ENCODE measurements at regions of chr2 and their contacts with region 1.

Region 1: DNA sequence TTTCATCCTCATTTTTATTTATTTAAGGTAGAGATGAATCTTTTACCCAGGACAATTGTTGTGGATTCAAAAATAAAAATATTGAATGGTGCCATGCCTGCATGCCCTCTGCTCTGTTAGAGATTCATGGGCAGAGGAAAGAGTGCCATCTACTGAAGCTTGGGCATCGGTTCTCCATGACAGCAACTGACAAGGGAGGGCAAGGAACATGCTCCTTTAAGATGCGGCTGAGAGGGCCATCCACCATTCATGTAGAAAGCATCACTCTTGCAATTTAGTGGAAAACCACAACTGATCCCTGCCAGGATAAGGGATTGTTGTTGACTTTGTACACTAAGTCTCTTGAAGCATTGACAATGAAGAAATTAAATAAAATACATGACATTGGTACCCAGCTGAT is 79.9 kb downstream of the PARD3B start:
- DNase-seq: peak; percentile 16
- H3K4me3 ChIP-seq: no peak overlapping the region
- H3K27ac ChIP-seq: no peak overlapping the region
- H3K4me1 ChIP-seq: no peaks in the 10 kb centered on the region
- H3K27me3 ChIP-seq: no peaks in the 10 kb centered on the region
- CTCF ChIP-seq: peak in 1 of 2 donors; percentile 43

Region 2: DNA sequence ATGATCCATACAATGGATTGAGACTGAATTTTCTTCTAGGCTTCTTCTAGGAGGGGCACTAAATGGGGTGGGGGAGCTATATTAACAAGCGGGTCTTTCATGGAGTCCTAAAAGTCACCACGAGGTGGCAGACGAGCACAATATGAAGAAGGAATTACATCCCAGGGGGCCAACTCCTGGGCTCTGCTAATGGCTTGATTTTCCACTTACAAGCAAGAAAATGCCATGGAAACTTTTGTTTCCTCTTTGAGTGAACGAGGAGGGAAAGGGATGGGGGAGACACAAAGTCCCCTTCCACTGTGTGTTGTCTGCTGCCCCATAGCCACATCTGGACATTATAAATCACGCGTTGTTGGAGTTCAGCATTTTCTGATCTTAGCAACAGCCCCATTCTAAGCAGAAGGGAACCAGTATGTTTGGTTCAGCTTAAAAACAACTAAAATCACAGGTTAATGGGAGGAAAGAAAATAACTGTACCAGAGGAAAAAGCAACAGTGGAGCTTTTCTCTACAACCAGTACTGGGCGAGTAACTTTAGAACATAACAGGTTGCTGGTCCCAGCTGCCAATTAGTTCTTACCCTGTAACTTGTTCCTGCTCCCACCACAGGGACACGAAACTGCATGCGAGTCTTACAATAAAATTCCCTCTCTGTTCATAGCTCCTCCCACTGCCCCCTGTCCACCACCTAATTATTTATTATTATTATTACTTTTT is 364.8 kb before region 1 on chr2:
- CTCF ChIA-PET with region 1: no interaction called
- dilution Hi-C with region 1: no loop called
- in situ Hi-C with region 1: no loop called
- intact Hi-C with region 1: loop called (anchors 5 kb)
- DNase-seq: peak; percentile 19
- H3K4me3 ChIP-seq: no peak overlapping the region
- H3K27ac ChIP-seq: no peak overlapping the region
- H3K4me1 ChIP-seq: peaks cover 4% of the 10 kb centered on the region
- H3K27me3 ChIP-seq: no peaks in the 10 kb centered on the region
- CTCF ChIP-seq: peak; percentile 65 to 76

Region 3: DNA sequence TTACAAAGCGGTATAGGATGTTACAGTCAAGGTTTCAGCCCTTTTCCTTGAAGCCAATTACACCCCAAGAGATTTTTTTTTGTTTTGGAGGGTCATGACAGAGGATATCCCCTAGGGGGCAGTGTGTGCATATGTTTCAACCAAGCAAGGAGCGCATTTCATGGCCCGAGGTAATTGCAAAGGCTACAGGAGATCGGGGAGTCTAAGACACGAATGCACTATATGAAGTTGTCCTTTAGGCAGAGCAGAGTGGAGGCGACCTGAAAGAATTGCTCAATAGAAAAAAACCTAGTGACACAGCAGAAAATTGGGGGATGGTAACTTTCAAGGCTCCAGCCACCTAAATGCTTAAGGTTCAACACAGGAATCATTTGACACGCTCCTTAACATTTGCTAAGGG is 299.7 kb before region 1 on chr2:
- CTCF ChIA-PET with region 1: no interaction called
- dilution Hi-C with region 1: no loop called
- in situ Hi-C with region 1: no loop called
- intact Hi-C with region 1: loop called (anchors 1 kb)
- DNase-seq: peak; percentile 59
- H3K4me3 ChIP-seq: no peak overlapping the region
- H3K27ac ChIP-seq: no peak overlapping the region
- H3K4me1 ChIP-seq: no peaks in the 10 kb centered on the region
- H3K27me3 ChIP-seq: no peaks in the 10 kb centered on the region
- CTCF ChIP-seq: peak; percentile 78 to 80

Region 4: DNA sequence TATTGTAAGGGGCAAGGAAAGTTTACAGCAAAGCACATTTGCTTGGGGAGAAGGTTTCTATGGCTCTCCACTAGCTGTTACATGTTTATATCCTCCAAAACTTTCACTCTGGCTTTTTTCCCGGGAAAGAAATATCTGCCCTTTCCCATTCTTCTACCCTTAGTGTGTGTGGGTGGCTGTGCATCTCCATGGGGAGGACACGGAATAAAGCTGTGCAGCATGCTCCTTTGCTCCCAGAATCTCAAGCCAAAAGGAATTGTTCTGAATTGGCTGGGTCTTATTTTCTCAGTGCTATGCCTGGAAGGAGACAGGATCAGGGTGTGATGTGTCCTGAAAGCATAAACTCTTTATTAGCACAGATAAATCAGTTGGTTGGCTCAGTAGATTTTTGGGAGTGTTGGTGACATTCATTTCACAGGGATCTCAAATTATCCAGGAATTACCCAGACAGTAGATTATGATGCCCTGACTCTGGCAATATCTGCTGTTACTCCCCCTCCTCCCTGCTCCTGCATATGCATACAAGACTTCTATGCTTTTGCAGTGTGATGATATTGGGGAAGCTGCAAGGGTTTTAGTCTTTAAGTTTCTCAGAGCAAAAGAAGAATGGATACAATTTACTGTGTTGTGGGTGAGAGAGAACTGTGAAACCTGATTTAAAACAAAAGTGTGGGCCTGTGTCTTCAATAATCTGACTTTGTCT is 16.8 kb before region 1 on chr2:
- CTCF ChIA-PET with region 1: no interaction called
- dilution Hi-C with region 1: no loop called
- in situ Hi-C with region 1: no loop called
- intact Hi-C with region 1: no loop called
- DNase-seq: no peak
- H3K4me3 ChIP-seq: no peak overlapping the region
- H3K27ac ChIP-seq: no peak overlapping the region
- H3K4me1 ChIP-seq: no peaks in the 10 kb centered on the region
- H3K27me3 ChIP-seq: peaks cover 2% of the 10 kb centered on the region
- CTCF ChIP-seq: no peak

Region 5: GRCh38 chr2:204722207-204722606 is 97.0 kb after region 1 on chr2:
- CTCF ChIA-PET with region 1: no interaction called
- dilution Hi-C with region 1: no loop called
- in situ Hi-C with region 1: no loop called
- intact Hi-C with region 1: no loop called
- DNase-seq: no peak
- H3K4me3 ChIP-seq: no peak overlapping the region
- H3K27ac ChIP-seq: no peak overlapping the region
- H3K4me1 ChIP-seq: no peaks in the 10 kb centered on the region
- H3K27me3 ChIP-seq: no peaks in the 10 kb centered on the region
- CTCF ChIP-seq: no peak

Measured in mammary epithelial cell (primary cell).